Heart left ventricle (tissue), 16 donors: ENCODE measurements at regions of chr1 and their contacts with region 1.

Region 1: GRCh38 chr1:53837924-53838652 is at the start of gene NDC1:
- DNase-seq: peak; percentile 91 to 93 (median 93)
- ATAC-seq: peak; percentile 97 to 99 (median 98)
- H3K4me3 ChIP-seq: peak within 1 kb of the TSS; percentile 60 to 98 (median 84)
- H3K27ac ChIP-seq: peak within 1 kb of the TSS; percentile 90 to 99 (median 96)
- H3K4me1 ChIP-seq: peaks cover 0 to 18% (median 5%) of the 10 kb centered on the region in 12 donors
- H3K27me3 ChIP-seq: no peaks in the 10 kb centered on the region
- CTCF ChIP-seq: peak in 4 of 12 donors; percentile 9 to 49 (median 40)
- POLR2A ChIP-seq: peak in 1 of 2 donors; percentile 34
- total RNA-seq, gene NDC1: 4.3 to 8.1 (median 6.5) TPM

Region 2: GRCh38 chr1:53600561-53600960 is 237.5 kb before region 1 on chr1:
- intact Hi-C with region 1: no loop called
- DNase-seq: peak in 1 of 5 donors; percentile 41
- ATAC-seq: no peak
- H3K4me3 ChIP-seq: no peak overlapping the region
- H3K27ac ChIP-seq: no peak overlapping the region
- H3K4me1 ChIP-seq: no peaks in the 10 kb centered on the region
- H3K27me3 ChIP-seq: no peaks in the 10 kb centered on the region
- CTCF ChIP-seq: no peak
- POLR2A ChIP-seq: no peak

Region 3: GRCh38 chr1:53681977-53682685 is 156.0 kb before region 1 on chr1:
- intact Hi-C with region 1: no loop called
- DNase-seq: peak in 3 of 5 donors; percentile 24 to 41 (median 40)
- ATAC-seq: peak in 1 of 4 donors; percentile 31
- H3K4me3 ChIP-seq: no peak overlapping the region
- H3K27ac ChIP-seq: no peak overlapping the region
- H3K4me1 ChIP-seq: peaks cover 0 to 22% (median 0%) of the 10 kb centered on the region in 12 donors
- H3K27me3 ChIP-seq: peaks cover 0 to 76% (median 14%) of the 10 kb centered on the region in 9 donors
- CTCF ChIP-seq: peak in 8 of 12 donors; percentile 12 to 34 (median 25)
- POLR2A ChIP-seq: no peak

Region 4: GRCh38 chr1:53889304-53890298 is 51.5 kb after region 1 on chr1 and contains the start of gene YIPF1:
- intact Hi-C with region 1: loop called in 1 of 10 experiments (anchors 5 kb)
- DNase-seq: peak; percentile 91 to 95 (median 93)
- ATAC-seq: peak; percentile 98 to 100 (median 100)
- H3K4me3 ChIP-seq: peak within 1 kb of the TSS; percentile 44 to 100 (median 81)
- H3K27ac ChIP-seq: peak within 1 kb of the TSS in 11 of 12 donors; percentile 19 to 92 (median 72)
- H3K4me1 ChIP-seq: peaks cover 0 to 45% (median 8%) of the 10 kb centered on the region in 12 donors
- H3K27me3 ChIP-seq: no peaks in the 10 kb centered on the region
- CTCF ChIP-seq: no peak
- POLR2A ChIP-seq: peak in 1 of 2 donors; percentile 67
- total RNA-seq, gene YIPF1: 11.2 to 23.5 (median 14.4) TPM

Region 5: DNA sequence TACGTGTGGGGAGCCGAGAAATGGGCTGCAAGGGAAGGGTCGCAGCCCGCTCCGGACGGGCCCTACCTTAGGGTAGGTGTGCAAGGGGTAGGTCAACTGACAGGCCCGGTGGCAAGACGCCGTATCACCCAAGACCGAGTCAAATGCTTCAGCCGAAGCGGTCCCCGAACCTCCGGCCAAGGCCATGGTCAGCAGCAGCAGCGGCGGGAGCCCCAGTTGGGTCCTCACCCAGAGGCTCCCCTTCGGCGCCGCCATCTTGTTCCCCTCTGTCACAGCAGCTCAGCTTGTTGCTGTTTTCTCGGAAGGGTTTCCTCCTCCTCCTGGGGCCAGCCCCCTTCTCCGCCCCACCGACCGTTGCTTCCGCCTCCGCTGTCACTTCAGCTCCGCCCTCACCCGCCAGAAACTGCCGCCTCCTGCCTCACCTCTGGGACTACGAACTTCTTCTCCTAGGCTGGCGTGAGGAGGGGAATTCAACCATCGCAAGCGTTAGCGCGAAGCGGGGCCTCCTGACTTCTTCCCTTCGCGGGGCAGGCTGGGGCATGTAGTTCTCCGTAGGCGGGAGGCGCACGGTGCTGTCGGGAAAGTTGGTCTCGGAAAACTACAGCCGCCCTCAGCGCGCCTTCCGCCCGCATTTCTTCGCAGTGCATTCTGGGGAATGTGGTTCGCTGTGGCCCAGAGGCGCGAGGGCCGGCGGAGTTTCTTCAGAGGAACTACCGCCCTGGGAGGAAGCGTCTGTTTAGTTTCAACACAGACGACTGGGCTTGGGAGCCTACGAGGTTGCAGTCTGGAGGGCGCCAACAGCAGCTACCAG is 215.1 kb after region 1 on chr1 and contains the starts of genes TCEANC2 and TMEM59:
- intact Hi-C with region 1: loop called in 2 of 10 experiments (anchors 5 kb)
- DNase-seq: peak; percentile 98 to 99 (median 98)
- ATAC-seq: peak; percentile 96 to 98 (median 98)
- H3K4me3 ChIP-seq: peak within 1 kb of the TSS; percentile 88 to 99 (median 95)
- H3K27ac ChIP-seq: peak within 1 kb of the TSS; percentile 88 to 98 (median 94)
- H3K4me1 ChIP-seq: peaks cover 0 to 51% (median 41%) of the 10 kb centered on the region in 12 donors
- H3K27me3 ChIP-seq: no peaks in the 10 kb centered on the region
- CTCF ChIP-seq: peak in 1 of 12 donors; percentile 7
- POLR2A ChIP-seq: peak in 1 of 2 donors; percentile 63
- total RNA-seq, gene TCEANC2: 3.0 to 6.6 (median 4.6) TPM
- total RNA-seq, gene TMEM59: 193 to 496 (median 352) TPM